ENCODE measurements at regions of chr1 and their contacts with region 1.

Region 1: GRCh38 chr1:30657759-30658253 is 65.6 kb downstream of the MATN1 start:
- DNase-seq: peak in 3 of 10 donors; percentile 14 to 35 (median 20)
- H3K4me3 ChIP-seq: no peak overlapping the region
- H3K27ac ChIP-seq: no peak overlapping the region
- H3K27me3 ChIP-seq: peaks cover 0 to 8% (median 0%) of the 10 kb centered on the region in 45 donors
- CTCF ChIP-seq: no peak

Region 2: GRCh38 chr1:29550119-29550898 is 1107.5 kb before region 1 on chr1:
- intact Hi-C with region 1: loop called in 1 of 2 experiments (anchors 5 kb)
- DNase-seq: no peak
- H3K4me3 ChIP-seq: no peak overlapping the region
- H3K27ac ChIP-seq: no peak overlapping the region
- H3K27me3 ChIP-seq: peaks cover 0 to 7% (median 0%) of the 10 kb centered on the region in 45 donors
- CTCF ChIP-seq: no peak

Region 3: GRCh38 chr1:30618335-30618747 is 39.5 kb before region 1 on chr1:
- intact Hi-C with region 1: no loop called
- DNase-seq: no peak
- H3K4me3 ChIP-seq: no peak overlapping the region
- H3K27ac ChIP-seq: no peak overlapping the region
- H3K27me3 ChIP-seq: peaks cover 0 to 18% (median 0%) of the 10 kb centered on the region in 45 donors
- CTCF ChIP-seq: no peak